B cell (primary cell): ENCODE measurements at regions of chr5 and their contacts with region 1.

Region 1: GRCh38 chr5:80255732-80256479 is at the start of gene SERINC5:
- DNase-seq: peak; percentile 87
- ATAC-seq: peak; percentile 87
- H3K4me3 ChIP-seq: peak within 1 kb of the TSS; percentile 80 to 93 (median 89)
- H3K4me3 Mint-ChIP-seq: peak within 1 kb of the TSS; percentile 100
- H3K27ac ChIP-seq: peak within 1 kb of the TSS; percentile 78 to 79
- H3K27ac Mint-ChIP-seq: peak within 1 kb of the TSS; percentile 98
- H3K4me1 ChIP-seq: peaks cover 9 to 24% of the 10 kb centered on the region in 2 donors
- H3K4me1 Mint-ChIP-seq: peaks cover 28% of the 10 kb centered on the region
- H3K27me3 ChIP-seq: no peaks in the 10 kb centered on the region
- H3K27me3 Mint-ChIP-seq: no peaks in the 10 kb centered on the region
- CTCF ChIP-seq: no peak
- total RNA-seq, gene SERINC5: 9.5 and 11.4 TPM in 2 replicates

Region 2: DNA sequence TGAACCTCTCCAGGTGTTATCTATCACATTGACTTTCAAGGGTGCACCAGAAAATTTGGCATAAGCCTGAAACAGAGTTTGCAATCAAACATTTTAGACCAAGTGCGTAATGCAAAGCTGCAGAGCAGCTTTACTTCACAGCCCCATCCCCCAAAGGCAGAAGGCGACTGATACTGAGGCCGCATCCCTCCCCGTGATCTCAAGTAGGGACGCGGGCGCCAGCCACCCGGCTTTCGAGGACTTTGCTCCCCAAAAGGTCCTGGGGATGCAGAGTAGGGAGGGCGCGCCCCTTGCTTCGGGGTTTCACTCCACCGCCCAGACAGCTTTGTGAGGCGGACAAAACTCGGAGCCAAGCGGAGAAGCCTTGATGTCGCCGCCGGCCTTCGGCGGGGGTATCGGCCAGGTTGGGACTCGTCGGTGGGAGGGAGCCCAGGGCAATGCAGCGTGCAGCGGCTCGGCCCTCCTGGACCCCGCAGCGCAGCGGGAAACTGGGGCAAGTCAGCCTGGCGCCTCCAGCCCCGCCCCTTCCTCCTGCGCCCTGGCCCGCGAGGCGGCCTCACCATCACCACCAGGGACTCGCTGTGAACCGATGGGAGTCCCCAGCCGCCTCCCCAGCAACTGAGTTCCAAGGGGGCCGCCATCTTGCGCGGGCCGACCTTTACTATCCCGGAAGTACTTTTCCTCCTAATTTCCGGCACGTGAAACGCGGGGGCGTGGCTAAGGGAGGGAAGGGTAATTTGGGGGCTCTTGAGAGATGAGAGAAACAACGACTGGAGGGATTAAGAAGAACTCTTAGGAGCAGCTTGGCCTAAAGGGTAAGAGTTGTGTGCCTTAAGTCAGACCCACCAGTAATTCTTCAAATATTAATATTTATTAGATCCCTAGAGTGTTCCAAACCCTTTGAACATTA is 265.1 kb before region 1 on chr5 and contains the start of gene MTX3:
- CTCF ChIA-PET with region 1: no interaction called
- POLR2A ChIA-PET with region 1: no interaction called
- intact Hi-C with region 1: loop called (anchors 1 kb)
- DNase-seq: peak; percentile 89
- ATAC-seq: peak; percentile 96
- H3K4me3 ChIP-seq: peak within 1 kb of the TSS; percentile 71 to 90 (median 78)
- H3K4me3 Mint-ChIP-seq: peak within 1 kb of the TSS; percentile 81
- H3K27ac ChIP-seq: peak within 1 kb of the TSS; percentile 65 to 70
- H3K27ac Mint-ChIP-seq: peak within 1 kb of the TSS; percentile 91
- H3K4me1 ChIP-seq: peaks cover 16% of the 10 kb centered on the region in 2 donors
- H3K4me1 Mint-ChIP-seq: peaks cover 17% of the 10 kb centered on the region
- H3K27me3 ChIP-seq: no peaks in the 10 kb centered on the region
- H3K27me3 Mint-ChIP-seq: peaks cover 9% of the 10 kb centered on the region
- CTCF ChIP-seq: no peak
- total RNA-seq, gene MTX3: 21.0 and 22.0 TPM in 2 replicates

Region 3: DNA sequence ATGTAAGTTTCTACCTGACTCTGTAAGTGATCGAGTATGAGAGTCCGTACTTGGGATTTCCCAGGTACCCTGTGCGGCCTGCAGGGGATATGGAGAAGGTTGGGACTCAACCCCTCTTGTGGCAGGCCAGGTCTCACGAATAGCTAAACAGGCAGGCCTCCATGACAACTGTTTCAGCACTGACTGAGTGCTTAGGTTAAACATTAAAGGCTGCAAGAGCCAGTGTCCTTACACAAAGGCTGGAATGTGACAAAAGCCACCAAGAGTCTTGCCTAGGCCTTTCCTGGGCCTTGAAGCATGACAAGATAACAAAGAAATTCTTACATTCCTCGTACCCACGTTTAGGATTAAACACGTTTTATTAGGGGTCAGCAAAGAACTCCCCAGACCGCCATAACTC is 162.1 kb before region 1 on chr5:
- CTCF ChIA-PET with region 1: interaction called, 14 read pairs
- POLR2A ChIA-PET with region 1: no interaction called
- intact Hi-C with region 1: no loop called
- DNase-seq: no peak
- ATAC-seq: no peak
- H3K4me3 ChIP-seq: no peak overlapping the region
- H3K4me3 Mint-ChIP-seq: no peak overlapping the region
- H3K27ac ChIP-seq: no peak overlapping the region
- H3K27ac Mint-ChIP-seq: no peak overlapping the region
- H3K4me1 ChIP-seq: no peaks in the 10 kb centered on the region
- H3K4me1 Mint-ChIP-seq: no peaks in the 10 kb centered on the region
- H3K27me3 ChIP-seq: no peaks in the 10 kb centered on the region
- H3K27me3 Mint-ChIP-seq: no peaks in the 10 kb centered on the region
- CTCF ChIP-seq: no peak

Region 4: GRCh38 chr5:80139466-80139972 is 116.4 kb before region 1 on chr5:
- CTCF ChIA-PET with region 1: interaction called, 4 read pairs
- POLR2A ChIA-PET with region 1: no interaction called
- intact Hi-C with region 1: loop called (anchors 5 kb)
- DNase-seq: no peak
- ATAC-seq: no peak
- H3K4me3 ChIP-seq: no peak overlapping the region
- H3K4me3 Mint-ChIP-seq: no peak overlapping the region
- H3K27ac ChIP-seq: no peak overlapping the region
- H3K27ac Mint-ChIP-seq: peak overlapping the region; percentile 10
- H3K4me1 ChIP-seq: peaks cover 44 to 45% of the 10 kb centered on the region in 2 donors
- H3K4me1 Mint-ChIP-seq: peaks cover 49% of the 10 kb centered on the region
- H3K27me3 ChIP-seq: no peaks in the 10 kb centered on the region
- H3K27me3 Mint-ChIP-seq: no peaks in the 10 kb centered on the region
- CTCF ChIP-seq: no peak

Region 5: GRCh38 chr5:80181618-80182211 is 74.2 kb before region 1 on chr5:
- CTCF ChIA-PET with region 1: no interaction called
- POLR2A ChIA-PET with region 1: no interaction called
- intact Hi-C with region 1: loop called (anchors 10 kb)
- DNase-seq: peak; percentile 33
- ATAC-seq: no peak
- H3K4me3 ChIP-seq: no peak overlapping the region
- H3K4me3 Mint-ChIP-seq: peak overlapping the region; percentile 30
- H3K27ac ChIP-seq: peak overlapping the region in 1 of 2 donors; percentile 34
- H3K27ac Mint-ChIP-seq: peak overlapping the region; percentile 57
- H3K4me1 ChIP-seq: peaks cover 25 to 37% of the 10 kb centered on the region in 2 donors
- H3K4me1 Mint-ChIP-seq: peaks cover 53% of the 10 kb centered on the region
- H3K27me3 ChIP-seq: no peaks in the 10 kb centered on the region
- H3K27me3 Mint-ChIP-seq: no peaks in the 10 kb centered on the region
- CTCF ChIP-seq: no peak